BJ (cell line): ENCODE measurements at regions of chr3 and their contacts with region 1.

Region 1: DNA sequence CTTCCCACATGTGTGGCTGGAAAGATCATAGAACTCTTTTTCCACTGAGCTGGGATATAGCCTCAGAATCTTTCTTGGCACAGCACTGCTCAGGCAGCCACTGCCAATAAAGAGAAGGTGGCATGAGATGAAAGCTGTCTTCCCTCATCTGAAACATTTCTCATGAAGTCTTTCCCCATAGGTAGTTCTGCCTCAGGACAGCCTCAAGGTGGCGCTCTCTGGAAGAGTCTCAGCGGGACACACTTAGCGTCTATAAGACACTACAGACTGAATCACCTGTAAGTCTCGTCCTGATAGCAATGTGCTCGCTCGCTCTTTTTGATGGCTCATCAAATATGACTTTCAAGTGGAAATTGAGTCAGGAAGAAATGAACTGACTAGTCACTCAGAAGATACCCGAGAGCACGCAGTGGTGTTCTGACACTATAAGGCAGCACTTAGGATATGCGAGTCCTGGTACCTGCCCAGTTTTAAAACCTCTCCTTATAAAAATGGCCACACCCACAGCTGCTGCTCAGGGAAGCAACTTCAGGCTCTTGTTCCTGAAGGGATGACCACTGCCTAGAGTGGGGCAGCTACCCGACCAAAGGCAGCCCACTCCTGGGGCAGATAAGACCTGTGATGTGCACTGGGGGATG is 269.5 kb downstream of the SUCLG2 start:
- DNase-seq: no peak
- H3K4me3 ChIP-seq: no peak overlapping the region
- H3K27me3 ChIP-seq: no peaks in the 10 kb centered on the region
- CTCF ChIP-seq: peak; percentile 58

Region 2: DNA sequence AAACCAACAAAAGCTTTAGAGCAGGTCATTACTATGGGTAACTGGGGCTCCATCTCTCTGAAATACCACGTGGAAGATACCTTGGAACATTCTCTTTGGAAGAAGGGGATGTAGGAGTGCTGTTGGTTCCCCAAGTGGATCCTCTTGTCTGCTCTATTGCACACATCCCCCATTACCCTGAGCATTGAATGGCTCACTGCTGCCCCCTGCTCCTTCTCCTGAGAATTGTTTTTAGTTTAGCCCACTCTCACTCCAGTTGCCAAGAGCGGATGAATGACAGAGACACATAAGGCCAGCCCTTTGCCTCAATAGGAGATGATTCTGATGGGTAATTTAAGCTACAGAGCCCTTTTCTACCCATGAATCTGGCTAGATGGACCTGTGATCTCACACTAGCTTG is 405.2 kb after region 1 on chr3:
- CTCF ChIA-PET with region 1: interaction called, 58 read pairs
- POLR2A ChIA-PET with region 1: no interaction called
- DNase-seq: no peak
- H3K4me3 ChIP-seq: no peak overlapping the region
- H3K27me3 ChIP-seq: no peaks in the 10 kb centered on the region
- CTCF ChIP-seq: peak; percentile 71